Transverse colon (tissue), 4 donors: ENCODE measurements at regions of chr6 and their contacts with region 1.

Region 1: DNA sequence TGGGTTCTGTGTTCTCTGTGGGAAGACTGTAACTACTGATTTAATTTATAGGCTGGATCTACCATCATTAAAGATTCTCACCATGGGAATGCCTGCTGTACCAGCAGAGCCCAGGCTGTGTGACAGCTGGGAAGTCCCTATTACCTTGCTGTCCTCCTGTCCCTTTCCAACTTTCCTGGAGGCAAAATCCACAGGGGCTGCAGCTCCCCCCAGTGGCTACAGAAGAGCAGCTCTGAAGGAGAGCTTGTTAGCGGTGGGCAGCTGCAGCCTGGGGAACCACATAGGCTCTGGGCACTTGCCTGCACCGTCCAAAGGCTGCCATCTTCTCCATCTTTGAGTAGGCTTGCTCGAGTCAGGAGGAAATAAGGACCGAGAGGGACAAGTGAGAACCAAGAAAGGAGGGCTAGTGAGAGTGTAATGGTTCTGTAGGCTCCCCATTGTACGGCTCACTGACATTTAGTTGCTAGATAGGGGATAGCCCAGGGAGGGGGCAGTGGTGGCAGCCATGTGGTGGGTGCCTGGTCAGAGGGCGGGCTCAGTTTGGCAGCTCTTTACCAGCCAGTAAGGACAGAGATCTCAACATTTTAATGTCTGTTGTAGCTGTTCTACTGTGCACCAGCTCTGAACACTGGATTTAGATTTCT is 155.1 kb upstream of the MLIP start:
- DNase-seq: peak; percentile 84
- H3K4me3 ChIP-seq: no peak overlapping the region
- H3K27ac ChIP-seq: no peak overlapping the region
- H3K4me1 ChIP-seq: peaks cover 0 to 5% (median 0%) of the 10 kb centered on the region in 4 donors
- H3K27me3 ChIP-seq: peaks cover 3% of the 10 kb centered on the region
- CTCF ChIP-seq: peak; percentile 67 to 74 (median 71)
- EP300 ChIP-seq: no peak
- POLR2A ChIP-seq: no peak

Region 2: GRCh38 chr6:53524455-53524815 is 431.8 kb before region 1 on chr6:
- in situ Hi-C with region 1: loop called in 1 of 4 experiments (anchors 25 kb)
- intact Hi-C with region 1: no loop called
- DNase-seq: no peak
- H3K4me3 ChIP-seq: no peak overlapping the region
- H3K27ac ChIP-seq: peak overlapping the region; percentile 35 to 63 (median 54)
- H3K4me1 ChIP-seq: peaks cover 6 to 52% (median 35%) of the 10 kb centered on the region in 4 donors
- H3K27me3 ChIP-seq: no peaks in the 10 kb centered on the region
- CTCF ChIP-seq: no peak
- EP300 ChIP-seq: no peak
- POLR2A ChIP-seq: no peak

Region 3: DNA sequence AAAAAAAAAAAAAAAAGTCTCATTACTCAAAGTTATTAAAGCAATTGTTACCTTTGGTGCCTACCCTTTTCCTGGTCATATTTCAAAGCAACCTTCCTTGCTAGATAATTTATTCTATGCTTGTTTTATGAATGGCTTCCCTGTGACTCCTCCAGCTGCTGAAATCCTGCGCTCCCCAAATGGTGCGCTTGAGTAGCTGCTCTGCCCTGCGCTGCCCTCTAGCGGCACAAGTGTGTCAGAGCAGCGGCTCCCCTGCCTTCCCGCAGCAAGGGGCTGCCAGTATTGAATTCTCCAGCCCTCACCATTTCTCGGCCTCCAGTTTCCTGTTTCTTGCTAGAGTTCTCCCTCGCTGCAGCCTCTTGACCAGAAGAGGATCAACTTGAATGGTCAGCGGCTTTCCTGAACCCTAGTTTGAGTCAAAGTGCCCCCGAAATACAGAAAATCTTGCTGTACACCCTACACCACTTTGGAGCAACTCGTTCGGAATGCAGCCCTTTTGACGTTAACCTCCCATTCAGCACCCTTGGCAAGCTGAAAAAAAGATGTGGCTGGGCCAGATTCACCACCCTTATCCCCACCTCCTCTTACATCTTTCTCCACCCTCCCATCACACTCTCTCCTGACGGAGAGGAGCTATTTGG is 230.3 kb before region 1 on chr6:
- in situ Hi-C with region 1: loop called in 1 of 4 experiments (anchors 10 kb)
- intact Hi-C with region 1: no loop called
- DNase-seq: peak; percentile 82
- H3K4me3 ChIP-seq: no peak overlapping the region
- H3K27ac ChIP-seq: no peak overlapping the region
- H3K4me1 ChIP-seq: peaks cover 0 to 13% (median 0%) of the 10 kb centered on the region in 4 donors
- H3K27me3 ChIP-seq: no peaks in the 10 kb centered on the region
- CTCF ChIP-seq: peak; percentile 90 to 97 (median 94)
- EP300 ChIP-seq: no peak
- POLR2A ChIP-seq: no peak

Region 4: DNA sequence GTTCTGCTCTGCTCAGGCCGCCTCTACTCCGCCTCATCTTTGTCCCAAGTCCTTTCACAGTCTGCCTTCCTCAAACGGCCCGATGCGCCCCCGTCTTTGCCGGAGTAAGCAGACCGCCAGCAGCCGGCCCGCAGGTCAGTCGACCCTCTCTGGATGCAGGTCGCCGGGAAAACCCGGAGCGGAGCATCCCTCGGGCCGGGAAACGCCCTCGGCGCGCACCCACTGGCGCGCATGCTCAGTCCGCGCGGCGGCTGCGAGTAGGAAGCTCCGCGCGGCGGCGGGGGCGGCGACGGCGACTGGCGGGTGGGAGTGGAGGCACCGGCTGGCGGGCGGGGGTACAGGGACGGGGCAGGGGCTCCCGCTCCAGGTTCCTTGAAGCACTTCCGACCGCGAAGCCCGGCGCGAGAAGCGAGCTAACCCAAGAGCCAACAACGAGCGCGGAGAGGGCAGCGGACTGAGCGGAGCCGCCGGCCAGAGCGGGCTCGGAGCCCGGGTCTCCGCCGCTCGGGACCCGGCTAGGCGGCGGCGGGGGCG is 161.4 kb before region 1 on chr6 and contains the start of gene LRRC1:
- in situ Hi-C with region 1: loop called in 3 of 4 experiments (anchors 5 to 25 kb)
- intact Hi-C with region 1: loop called (anchors 1 kb)
- DNase-seq: peak; percentile 95
- H3K4me3 ChIP-seq: peak within 1 kb of the TSS; percentile 74 to 94 (median 90)
- H3K27ac ChIP-seq: peak within 1 kb of the TSS; percentile 85 to 89 (median 87)
- H3K4me1 ChIP-seq: peaks cover 0 to 46% (median 24%) of the 10 kb centered on the region in 4 donors
- H3K27me3 ChIP-seq: no peaks in the 10 kb centered on the region
- CTCF ChIP-seq: no peak
- EP300 ChIP-seq: no peak
- POLR2A ChIP-seq: peak; percentile 66
- total RNA-seq, gene LRRC1: 71.0 to 151 (median 91.6) TPM

Region 5: DNA sequence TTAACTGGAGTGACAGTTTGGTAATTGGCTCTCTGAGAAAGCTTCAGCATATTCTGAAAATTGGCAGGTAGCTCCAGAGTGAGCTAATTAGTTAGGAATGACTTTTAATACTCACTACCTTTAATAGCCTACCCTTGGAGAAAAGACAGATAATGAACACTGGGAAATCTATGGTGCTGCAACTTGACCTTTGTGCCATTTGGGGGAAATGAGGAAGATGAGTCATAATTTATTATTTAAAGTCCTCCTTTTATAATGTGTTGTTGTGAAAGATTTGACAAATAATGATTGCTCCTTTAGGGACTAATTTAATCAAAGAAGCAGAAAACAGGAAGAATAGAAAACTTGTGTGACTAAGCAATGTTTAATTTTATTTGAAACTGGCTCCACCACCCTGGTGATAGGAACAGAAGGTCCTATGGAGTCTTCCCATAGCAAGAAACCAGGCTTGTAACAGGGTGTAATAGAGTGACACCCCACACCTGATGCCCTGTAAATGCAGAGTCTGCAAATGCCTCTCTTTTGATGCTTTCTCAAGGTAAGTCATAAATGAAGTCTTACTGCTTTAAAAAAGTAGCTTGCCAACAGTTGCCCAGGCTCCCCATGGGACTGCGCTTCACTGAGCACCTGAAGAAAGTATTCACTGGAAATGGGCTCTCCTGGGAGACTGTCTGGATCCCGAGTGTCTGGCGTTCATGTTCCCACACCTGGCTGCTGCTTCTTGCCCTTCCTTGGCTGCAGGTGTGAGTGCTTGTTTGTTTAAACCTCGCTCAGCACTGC is 27.0 kb before region 1 on chr6:
- in situ Hi-C with region 1: no loop called
- intact Hi-C with region 1: loop called (anchors 2 kb)
- DNase-seq: no peak
- H3K4me3 ChIP-seq: no peak overlapping the region
- H3K27ac ChIP-seq: no peak overlapping the region
- H3K4me1 ChIP-seq: peaks cover 6 to 47% (median 33%) of the 10 kb centered on the region in 4 donors
- H3K27me3 ChIP-seq: no peaks in the 10 kb centered on the region
- CTCF ChIP-seq: no peak
- EP300 ChIP-seq: no peak
- POLR2A ChIP-seq: no peak

Region 6: DNA sequence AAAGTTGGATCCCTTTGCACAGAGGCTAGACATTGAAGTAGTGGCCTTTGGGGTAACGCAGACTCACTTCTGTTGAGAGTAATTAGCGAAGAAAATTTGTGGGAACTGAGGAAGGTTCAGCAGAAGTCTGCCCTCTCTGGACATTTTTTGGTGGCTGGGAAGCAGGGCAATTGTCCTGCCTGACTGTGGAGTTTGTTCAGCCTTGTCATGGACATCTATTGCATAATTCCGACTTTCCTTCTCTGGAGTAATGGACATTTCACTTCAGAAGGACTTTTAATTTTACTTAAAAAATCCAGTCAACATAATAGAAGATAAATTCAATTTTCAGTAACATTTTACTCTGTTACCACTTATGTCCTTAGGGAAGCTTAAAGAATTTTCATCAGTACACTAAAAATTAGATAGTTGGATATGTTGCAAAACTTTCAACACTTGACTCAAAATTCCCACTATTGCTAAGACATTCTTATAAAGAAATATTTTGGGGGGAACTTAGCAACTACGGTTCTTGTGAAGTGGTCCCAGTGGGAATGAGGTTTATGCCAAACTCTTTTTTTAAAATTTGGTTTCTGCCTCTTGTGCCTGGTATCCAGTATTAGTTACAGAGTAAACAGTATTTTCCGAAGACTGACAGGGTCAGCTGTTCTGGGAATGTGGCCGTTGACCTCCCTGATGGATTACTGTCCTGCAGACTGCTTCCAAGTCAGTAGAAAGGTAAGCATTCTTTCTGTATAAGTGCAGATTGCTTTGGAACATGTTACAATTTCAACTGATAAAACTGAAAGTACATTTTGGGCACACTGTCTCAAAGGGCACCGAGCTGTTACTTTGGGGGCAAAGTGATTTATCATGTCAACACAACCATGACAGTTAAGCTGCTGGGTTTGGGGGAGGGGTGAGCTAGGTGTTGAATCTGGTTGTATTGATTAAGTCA is 54.4 kb after region 1 on chr6:
- in situ Hi-C with region 1: no loop called
- intact Hi-C with region 1: no loop called
- DNase-seq: no peak
- H3K4me3 ChIP-seq: no peak overlapping the region
- H3K27ac ChIP-seq: no peak overlapping the region
- H3K4me1 ChIP-seq: no peaks in the 10 kb centered on the region
- H3K27me3 ChIP-seq: no peaks in the 10 kb centered on the region
- CTCF ChIP-seq: no peak
- EP300 ChIP-seq: no peak
- POLR2A ChIP-seq: no peak

Region 7: GRCh38 chr6:54665278-54665677 is 709.1 kb after region 1 on chr6:
- in situ Hi-C with region 1: no loop called
- intact Hi-C with region 1: no loop called
- DNase-seq: no peak
- H3K4me3 ChIP-seq: no peak overlapping the region
- H3K27ac ChIP-seq: no peak overlapping the region
- H3K4me1 ChIP-seq: no peaks in the 10 kb centered on the region
- H3K27me3 ChIP-seq: no peaks in the 10 kb centered on the region
- CTCF ChIP-seq: no peak
- EP300 ChIP-seq: no peak
- POLR2A ChIP-seq: no peak